Naive thymus-derived CD4-positive, alpha-beta T cell (primary cell): ENCODE measurements at regions of chr19 and their contacts with region 1.

Region 1: GRCh38 chr19:53158119-53158656 is 665 bp downstream of the ZNF347 start:
- DNase-seq: peak in 5 of 9 donors; percentile 9 to 41 (median 26)
- ATAC-seq: peak; percentile 35
- H3K4me3 ChIP-seq: peak overlapping the region; percentile 97
- H3K4me3 Mint-ChIP-seq: peak overlapping the region; percentile 65 to 91 (median 86)
- H3K27ac ChIP-seq: peak overlapping the region; percentile 70
- H3K27ac Mint-ChIP-seq: peak overlapping the region; percentile 44 to 90 (median 85)
- H3K4me1 ChIP-seq: peaks cover 4 to 7% of the 10 kb centered on the region in 2 donors
- H3K4me1 Mint-ChIP-seq: peaks cover 12 to 32% (median 27%) of the 10 kb centered on the region in 7 donors
- H3K27me3 ChIP-seq: no peaks in the 10 kb centered on the region
- H3K27me3 Mint-ChIP-seq: no peaks in the 10 kb centered on the region

Region 2: GRCh38 chr19:52993323-52994178 is 164.6 kb before region 1 on chr19:
- CTCF ChIA-PET with region 1: no interaction called
- POLR2A ChIA-PET with region 1: no interaction called
- intact Hi-C with region 1: loop called in 1 of 2 experiments (anchors 1 kb)
- DNase-seq: peak; percentile 49 to 85 (median 81)
- ATAC-seq: peak; percentile 100
- H3K4me3 ChIP-seq: peak overlapping the region; percentile 60
- H3K4me3 Mint-ChIP-seq: peak overlapping the region; percentile 56 to 92 (median 86)
- H3K27ac ChIP-seq: no peak overlapping the region
- H3K27ac Mint-ChIP-seq: peak overlapping the region in 5 of 9 donors; percentile 25 to 83 (median 54)
- H3K4me1 ChIP-seq: peaks cover 0 to 6% of the 10 kb centered on the region in 2 donors
- H3K4me1 Mint-ChIP-seq: peaks cover 8 to 26% (median 14%) of the 10 kb centered on the region in 7 donors
- H3K27me3 ChIP-seq: no peaks in the 10 kb centered on the region
- H3K27me3 Mint-ChIP-seq: peaks cover 0 to 23% (median 14%) of the 10 kb centered on the region in 5 donors

Region 3: DNA sequence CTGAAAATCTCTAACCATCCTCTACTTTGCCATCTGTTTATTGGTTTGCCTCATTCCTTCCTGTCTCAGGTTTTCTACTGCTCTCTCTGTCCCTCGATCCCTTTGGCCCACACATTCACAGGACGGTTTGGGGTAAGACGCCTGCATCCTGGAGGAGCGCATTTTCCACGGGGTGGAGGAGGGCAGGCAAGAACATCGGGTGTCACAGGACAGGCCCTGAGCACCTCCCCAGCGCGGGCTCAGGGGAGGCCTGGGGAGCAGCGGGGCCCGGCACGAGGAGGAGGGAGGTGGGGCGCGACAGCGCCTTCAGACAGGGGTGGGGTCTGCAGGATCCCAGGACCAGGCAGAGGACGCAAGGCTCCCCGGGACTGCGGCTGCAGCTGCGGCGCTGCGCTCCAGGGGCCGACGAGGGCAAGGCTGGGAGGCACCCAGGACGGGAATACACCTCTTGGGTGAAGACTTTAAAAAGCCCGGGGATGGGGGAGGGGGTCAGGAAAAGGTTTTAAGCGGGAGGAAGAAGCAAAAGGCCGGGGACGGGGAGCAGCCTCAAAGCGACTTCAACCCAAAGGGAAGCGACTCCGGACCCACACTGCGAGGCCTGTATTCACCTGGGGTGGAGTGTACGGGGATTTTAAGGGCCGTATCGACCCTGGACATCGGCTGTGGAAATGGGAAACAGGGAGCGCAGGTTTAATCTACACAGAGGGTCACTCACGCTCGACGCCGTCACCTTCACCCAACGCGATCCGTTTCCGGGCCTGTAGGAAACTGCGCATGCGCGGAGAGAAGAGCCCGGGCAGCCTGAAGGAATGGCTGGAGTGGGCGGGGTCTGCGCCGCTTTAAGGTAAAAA is 25.8 kb before region 1 on chr19 and contains the start of gene ZNF415:
- CTCF ChIA-PET with region 1: no interaction called
- POLR2A ChIA-PET with region 1: no interaction called
- intact Hi-C with region 1: no loop called
- DNase-seq: peak in 7 of 9 donors; percentile 18 to 60 (median 33)
- ATAC-seq: no peak
- H3K4me3 ChIP-seq: peak within 1 kb of the TSS; percentile 9
- H3K4me3 Mint-ChIP-seq: peak within 1 kb of the TSS; percentile 55 to 85 (median 72)
- H3K27ac ChIP-seq: peak within 1 kb of the TSS; percentile 53
- H3K27ac Mint-ChIP-seq: peak within 1 kb of the TSS in 3 of 9 donors; percentile 55 to 84 (median 64)
- H3K4me1 ChIP-seq: no peaks in the 10 kb centered on the region
- H3K4me1 Mint-ChIP-seq: peaks cover 4 to 14% (median 10%) of the 10 kb centered on the region in 7 donors
- H3K27me3 ChIP-seq: no peaks in the 10 kb centered on the region
- H3K27me3 Mint-ChIP-seq: peaks cover 0 to 19% (median 9%) of the 10 kb centered on the region in 5 donors
- total RNA-seq, gene ZNF415: 0.58 to 2.1 (median 0.98) TPM

Region 4: DNA sequence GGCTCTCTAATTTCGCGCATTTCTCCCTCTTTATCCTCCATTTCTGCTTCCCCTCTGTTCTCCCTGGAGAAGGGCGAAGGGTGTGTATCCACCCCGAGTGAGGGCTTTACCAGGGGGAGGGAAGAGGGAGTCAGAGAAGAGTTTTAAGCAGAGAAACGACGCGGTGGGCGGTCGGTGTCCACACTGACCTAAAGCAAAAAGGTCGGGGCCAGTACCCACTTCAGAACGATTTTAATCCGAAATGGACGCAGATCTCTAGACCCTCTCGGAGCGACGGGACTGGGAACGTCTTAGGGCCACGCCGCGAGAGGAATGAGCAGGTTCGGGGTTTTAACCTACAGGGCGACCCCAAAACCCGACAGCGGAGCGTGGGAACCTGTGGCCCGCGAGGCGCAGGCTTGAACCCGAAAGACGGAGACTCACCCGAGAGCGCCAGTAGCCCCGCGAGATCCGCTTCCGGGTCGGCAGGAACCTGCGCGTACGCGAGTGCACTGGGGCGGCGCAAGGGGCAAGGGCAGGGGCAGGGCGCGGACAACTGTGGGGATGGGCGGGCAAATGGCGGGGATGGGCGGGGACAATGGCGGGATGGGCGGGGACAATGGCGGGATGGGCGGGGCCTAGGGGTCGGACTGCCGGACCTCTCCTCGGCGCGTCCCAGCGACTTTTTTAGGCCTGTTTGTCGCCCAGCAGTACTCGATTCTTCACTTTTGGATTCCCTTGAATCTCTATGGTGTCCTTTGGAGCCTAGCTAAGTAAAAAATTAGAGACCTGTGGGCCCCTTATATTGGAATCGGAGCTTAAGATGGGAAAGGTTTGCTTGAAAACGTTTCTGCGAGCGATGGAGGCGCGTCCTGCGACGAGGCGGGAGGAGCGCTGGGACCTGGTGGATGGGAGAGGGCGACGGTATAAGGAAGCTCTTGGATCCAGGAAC is 96.5 kb after region 1 on chr19 and contains the start of gene ZNF677:
- CTCF ChIA-PET with region 1: no interaction called
- POLR2A ChIA-PET with region 1: no interaction called
- intact Hi-C with region 1: loop called in 1 of 2 experiments (anchors 1 kb)
- DNase-seq: peak; percentile 42 to 86 (median 77)
- ATAC-seq: peak; percentile 100
- H3K4me3 ChIP-seq: peak within 1 kb of the TSS; percentile 54
- H3K4me3 Mint-ChIP-seq: peak within 1 kb of the TSS; percentile 84 to 93 (median 89)
- H3K27ac ChIP-seq: peak within 1 kb of the TSS; percentile 66
- H3K27ac Mint-ChIP-seq: peak within 1 kb of the TSS in 8 of 9 donors; percentile 21 to 94 (median 78)
- H3K4me1 ChIP-seq: peaks cover 0 to 6% of the 10 kb centered on the region in 2 donors
- H3K4me1 Mint-ChIP-seq: peaks cover 0 to 17% (median 11%) of the 10 kb centered on the region in 7 donors
- H3K27me3 ChIP-seq: no peaks in the 10 kb centered on the region
- H3K27me3 Mint-ChIP-seq: peaks cover 0 to 13% (median 12%) of the 10 kb centered on the region in 5 donors
- total RNA-seq, gene ZNF677: 2.2 to 25.9 (median 7.4) TPM

Region 5: GRCh38 chr19:53467485-53468262 is 309.5 kb after region 1 on chr19 and contains the start of gene ZNF813:
- CTCF ChIA-PET with region 1: no interaction called
- POLR2A ChIA-PET with region 1: no interaction called
- intact Hi-C with region 1: loop called in 1 of 2 experiments (anchors 5 kb)
- DNase-seq: peak; percentile 81 to 95 (median 92)
- ATAC-seq: peak; percentile 100
- H3K4me3 ChIP-seq: peak within 1 kb of the TSS; percentile 74
- H3K4me3 Mint-ChIP-seq: peak within 1 kb of the TSS; percentile 88 to 96 (median 94)
- H3K27ac ChIP-seq: peak within 1 kb of the TSS; percentile 73
- H3K27ac Mint-ChIP-seq: peak within 1 kb of the TSS; percentile 76 to 96 (median 90)
- H3K4me1 ChIP-seq: no peaks in the 10 kb centered on the region
- H3K4me1 Mint-ChIP-seq: peaks cover 20 to 45% (median 31%) of the 10 kb centered on the region in 7 donors
- H3K27me3 ChIP-seq: no peaks in the 10 kb centered on the region
- H3K27me3 Mint-ChIP-seq: peaks cover 0 to 24% (median 12%) of the 10 kb centered on the region in 5 donors
- total RNA-seq, gene ZNF813: 2.5 to 11.2 (median 4.6) TPM